ENCODE measurements at regions of chr4 and their contacts with region 1.

Region 1: DNA sequence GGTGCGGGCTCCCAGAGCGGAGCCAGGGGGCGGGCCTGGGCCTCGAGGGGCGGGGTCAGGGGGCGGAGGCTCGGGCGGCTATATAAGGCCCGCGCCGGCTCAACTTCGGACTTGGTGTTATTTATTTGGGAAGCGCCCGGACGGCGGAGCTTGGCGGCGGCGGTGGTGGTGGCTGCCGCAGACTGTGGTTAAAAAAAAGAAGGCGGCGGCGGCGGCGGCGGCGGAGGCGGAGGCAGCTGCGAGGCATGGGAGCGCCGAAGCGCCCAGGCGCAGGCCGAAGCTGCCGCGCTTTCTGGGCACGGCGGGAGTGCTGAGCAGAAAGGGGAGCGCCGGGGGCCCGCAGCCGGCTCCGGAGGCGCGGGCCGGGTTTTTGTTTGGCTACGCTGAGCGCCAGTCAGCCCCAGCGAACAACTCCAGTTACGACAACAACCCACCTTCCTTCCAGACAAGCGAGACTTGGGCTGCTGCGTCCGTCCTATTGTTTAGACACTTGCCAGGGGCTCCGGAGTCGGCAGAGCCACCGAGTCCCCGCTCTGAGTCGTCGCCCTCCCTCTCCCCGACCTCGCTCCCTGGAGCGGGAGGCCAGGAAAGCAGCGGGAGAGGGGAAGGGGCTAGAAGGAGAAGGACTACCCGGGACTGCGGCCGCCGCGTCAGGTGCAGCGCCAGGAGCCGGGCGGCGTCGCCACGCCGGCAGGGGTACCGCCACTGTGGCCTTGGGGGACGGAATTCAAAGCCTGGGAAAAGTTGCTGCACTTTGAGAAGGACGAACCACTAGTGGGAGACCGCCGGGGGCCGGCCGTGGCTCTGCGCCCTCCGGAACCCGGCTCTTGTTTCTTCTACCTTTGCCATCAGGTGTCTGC is at the start of gene SLIT2:
- DNase-seq: peak; percentile 87
- H3K4me3 ChIP-seq: peak within 1 kb of the TSS; percentile 69 to 80 (median 79)
- H3K27ac ChIP-seq: peak within 1 kb of the TSS; percentile 3
- H3K4me1 ChIP-seq: peaks cover 36% of the 10 kb centered on the region
- H3K27me3 ChIP-seq: no peaks in the 10 kb centered on the region
- CTCF ChIP-seq: no peak
- POLR2A ChIP-seq: peak; percentile 95
- total RNA-seq, gene SLIT2: 22.2 and 28.2 TPM in 2 replicates

Region 2: GRCh38 chr4:19309378-19309777 is 942.6 kb before region 1 on chr4:
- CTCF ChIA-PET with region 1: interaction called, 17 read pairs
- POLR2A ChIA-PET with region 1: no interaction called
- dilution Hi-C with region 1: no loop called
- intact Hi-C with region 1: loop called (anchors 1 kb)
- DNase-seq: peak; percentile 55
- H3K4me3 ChIP-seq: no peak overlapping the region
- H3K27ac ChIP-seq: no peak overlapping the region
- H3K4me1 ChIP-seq: peaks cover 3% of the 10 kb centered on the region
- H3K27me3 ChIP-seq: no peaks in the 10 kb centered on the region
- CTCF ChIP-seq: peak in 1 of 2 donors; percentile 10
- POLR2A ChIP-seq: no peak

Region 3: GRCh38 chr4:19776021-19776459 is 476.0 kb before region 1 on chr4:
- CTCF ChIA-PET with region 1: interaction called, 22 read pairs
- POLR2A ChIA-PET with region 1: interaction called, 5 read pairs
- dilution Hi-C with region 1: no loop called
- intact Hi-C with region 1: loop called (anchors 5 kb)
- DNase-seq: peak; percentile 96
- H3K4me3 ChIP-seq: no peak overlapping the region
- H3K27ac ChIP-seq: peak overlapping the region; percentile 72
- H3K4me1 ChIP-seq: peaks cover 22% of the 10 kb centered on the region
- H3K27me3 ChIP-seq: no peaks in the 10 kb centered on the region
- CTCF ChIP-seq: no peak
- POLR2A ChIP-seq: no peak

Region 4: DNA sequence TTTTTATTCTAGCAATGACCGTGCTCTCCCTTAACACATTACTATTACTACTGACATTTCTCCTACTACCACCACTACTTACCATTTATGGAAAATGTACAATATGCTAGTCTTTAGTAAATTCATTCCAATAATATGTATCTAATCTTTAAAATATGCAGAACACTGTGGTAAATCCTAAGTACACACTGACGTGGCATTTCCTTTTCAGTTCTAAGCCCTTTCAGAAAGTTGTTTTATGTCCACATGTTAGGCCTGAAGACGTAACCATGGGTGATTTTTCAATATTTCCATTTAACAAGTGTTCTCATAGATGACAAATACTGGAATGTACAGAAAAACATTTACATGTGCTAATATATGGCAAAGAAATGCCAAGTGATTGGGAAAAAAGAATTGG is 269.0 kb before region 1 on chr4:
- CTCF ChIA-PET with region 1: interaction called, 9 read pairs
- POLR2A ChIA-PET with region 1: no interaction called
- dilution Hi-C with region 1: no loop called
- intact Hi-C with region 1: loop called (anchors 1 kb)
- DNase-seq: peak; percentile 90
- H3K4me3 ChIP-seq: no peak overlapping the region
- H3K27ac ChIP-seq: peak overlapping the region; percentile 85
- H3K4me1 ChIP-seq: peaks cover 25% of the 10 kb centered on the region
- H3K27me3 ChIP-seq: no peaks in the 10 kb centered on the region
- CTCF ChIP-seq: no peak
- POLR2A ChIP-seq: peak; percentile 19

Region 5: GRCh38 chr4:20237894-20238537 is 14.0 kb before region 1 on chr4:
- CTCF ChIA-PET with region 1: interaction called, 10 read pairs
- POLR2A ChIA-PET with region 1: no interaction called
- dilution Hi-C with region 1: no loop called
- intact Hi-C with region 1: no loop called
- DNase-seq: no peak
- H3K4me3 ChIP-seq: no peak overlapping the region
- H3K27ac ChIP-seq: no peak overlapping the region
- H3K4me1 ChIP-seq: no peaks in the 10 kb centered on the region
- H3K27me3 ChIP-seq: no peaks in the 10 kb centered on the region
- CTCF ChIP-seq: no peak
- POLR2A ChIP-seq: no peak

Region 6: DNA sequence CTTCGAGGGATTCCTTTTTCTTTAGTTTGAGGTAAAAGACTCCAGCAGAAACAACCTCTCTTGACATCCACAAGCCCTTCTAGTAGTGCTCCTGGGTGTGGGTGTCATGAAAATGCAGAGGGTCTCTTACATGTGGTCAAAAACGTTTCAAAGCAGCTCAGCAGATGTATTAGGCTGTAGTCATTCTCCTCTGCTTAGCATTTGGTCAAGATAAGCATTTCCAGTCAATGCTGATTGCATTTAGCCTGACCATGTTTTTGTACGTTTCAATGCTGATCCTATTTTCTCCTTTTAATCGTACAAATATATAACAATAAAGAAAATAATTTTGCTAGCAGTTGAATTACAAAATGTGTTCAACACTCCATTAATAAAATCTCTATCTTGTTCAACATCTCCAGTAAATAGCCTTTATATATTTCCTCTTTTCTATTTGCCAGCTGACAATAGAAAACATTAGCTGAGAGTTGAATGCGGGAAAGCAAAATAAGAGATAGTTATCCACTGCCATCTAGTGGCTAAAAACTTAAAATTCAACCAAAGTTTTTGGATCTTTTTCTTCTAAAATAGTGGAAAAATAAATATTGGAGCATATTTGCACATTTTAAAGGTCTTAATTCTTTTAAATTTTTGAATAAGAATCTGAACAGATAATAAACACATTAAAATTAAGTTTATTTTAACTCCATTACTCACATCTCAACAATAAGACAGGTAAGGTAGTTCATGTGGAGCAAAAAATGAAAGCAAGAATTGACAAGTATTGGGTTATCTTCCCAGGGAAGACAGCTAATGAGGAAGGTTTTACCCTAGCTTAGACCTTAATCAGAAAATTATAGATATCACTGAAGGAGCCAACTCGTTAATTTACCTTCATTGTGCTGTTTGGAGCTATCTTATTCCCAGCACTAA is 433.1 kb after region 1 on chr4:
- CTCF ChIA-PET with region 1: interaction called, 19 read pairs
- POLR2A ChIA-PET with region 1: no interaction called
- dilution Hi-C with region 1: no loop called
- intact Hi-C with region 1: loop called (anchors 1 kb)
- DNase-seq: peak; percentile 40
- H3K4me3 ChIP-seq: no peak overlapping the region
- H3K27ac ChIP-seq: no peak overlapping the region
- H3K4me1 ChIP-seq: no peaks in the 10 kb centered on the region
- H3K27me3 ChIP-seq: peaks cover 4 to 11% of the 10 kb centered on the region in 2 experiments
- CTCF ChIP-seq: peak; percentile 20 to 22
- POLR2A ChIP-seq: no peak